Activated T-helper 2 cell treated with anti-CD3 and anti-CD28 coated beads, Interferon-gamma antibody, Interleukin-2, Interleukin-4, amounts not matched to agents 10 μg/mL and 5 μg/mL and 100 μg/mL, durations not matched to agents 14 hours and 24 hours and 36 hours (primary cell): ENCODE measurements at regions of chr3 and their contacts with region 1.

Region 1: DNA sequence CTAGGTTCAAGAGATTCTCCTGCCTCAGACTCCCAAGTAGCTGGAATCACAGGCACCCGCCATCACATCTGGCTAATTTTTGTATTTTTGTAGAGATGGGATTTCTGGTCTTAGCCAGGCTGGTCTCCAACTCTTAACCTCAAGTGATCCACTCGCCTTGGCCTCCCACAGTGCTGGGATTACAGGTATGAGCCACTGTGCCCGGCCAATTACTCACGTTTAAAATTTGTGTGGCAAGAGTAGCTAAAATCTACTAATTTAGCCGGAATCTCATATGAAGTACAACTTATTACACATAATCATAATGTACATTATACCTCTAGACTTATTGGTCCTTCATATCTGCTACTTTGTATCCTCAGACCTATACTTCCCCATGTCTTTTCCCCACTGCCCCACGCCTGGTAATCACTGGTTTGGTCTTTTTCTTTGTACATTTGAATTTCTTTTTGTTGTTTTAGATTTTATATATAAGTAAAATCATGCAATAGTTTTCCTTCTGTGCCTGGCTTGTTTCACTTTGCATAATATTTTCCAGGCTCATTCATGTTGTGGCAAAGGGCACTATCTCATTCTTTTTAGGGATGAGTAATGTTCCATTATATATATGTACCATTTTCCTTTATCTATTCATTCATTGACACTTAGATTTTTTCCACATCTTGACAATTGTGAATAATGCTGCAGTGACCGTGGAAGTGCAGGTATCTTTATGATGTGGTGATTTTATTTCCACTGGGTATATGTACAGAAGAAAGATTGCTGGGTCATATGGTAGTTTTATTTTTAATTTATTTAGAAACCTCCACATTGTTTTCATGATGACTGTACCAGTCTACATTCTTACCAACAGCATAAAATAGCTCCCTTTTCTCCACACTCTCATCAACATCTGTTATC is 605.0 kb upstream of the CBLB start:
- DNase-seq: no peak
- H3K4me3 Mint-ChIP-seq: no peak overlapping the region
- H3K27ac Mint-ChIP-seq: peak overlapping the region; percentile 84
- H3K4me1 Mint-ChIP-seq: peaks cover 7% of the 10 kb centered on the region
- H3K27me3 Mint-ChIP-seq: no peaks in the 10 kb centered on the region

Region 2: DNA sequence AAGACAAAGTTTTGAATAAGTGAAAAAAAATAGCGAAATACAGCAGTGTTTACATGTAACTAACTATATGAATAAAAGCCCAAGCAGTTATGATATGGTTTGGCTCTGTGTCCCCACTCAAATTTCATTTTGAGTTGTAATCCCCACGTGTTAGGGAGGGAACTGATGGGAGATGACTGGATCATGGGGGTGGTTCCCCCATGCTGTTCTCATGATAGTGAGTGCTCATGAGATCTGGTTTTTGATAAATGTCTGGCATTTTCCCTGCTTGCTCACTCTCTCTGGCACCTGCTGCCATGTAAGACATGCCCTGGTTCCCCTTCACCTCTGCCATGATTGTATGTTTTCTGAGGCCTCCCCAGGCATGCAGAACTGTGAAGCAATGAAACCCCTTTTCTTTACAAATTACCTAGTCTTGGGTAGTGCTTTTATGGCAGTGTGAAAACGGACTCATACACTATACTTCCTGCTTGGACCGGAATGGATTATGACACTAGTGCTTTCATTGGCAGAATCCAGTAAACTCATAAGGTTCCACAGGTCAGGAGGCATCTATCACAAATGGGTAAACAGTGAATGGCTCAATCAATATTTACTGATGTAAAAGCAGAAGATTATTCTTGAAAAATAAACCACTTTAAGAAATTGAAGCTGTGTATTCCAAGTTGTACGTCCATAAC is 797.1 kb before region 1 on chr3:
- intact Hi-C with region 1: loop called (anchors 1 kb)
- DNase-seq: no peak
- H3K4me3 Mint-ChIP-seq: no peak overlapping the region
- H3K27ac Mint-ChIP-seq: peak overlapping the region; percentile 74
- H3K4me1 Mint-ChIP-seq: peaks cover 23% of the 10 kb centered on the region
- H3K27me3 Mint-ChIP-seq: no peaks in the 10 kb centered on the region

Region 3: GRCh38 chr3:105891101-105891500 is 582.7 kb before region 1 on chr3:
- intact Hi-C with region 1: loop called (anchors 5 kb)
- DNase-seq: no peak
- H3K4me3 Mint-ChIP-seq: no peak overlapping the region
- H3K27ac Mint-ChIP-seq: peak overlapping the region; percentile 79
- H3K4me1 Mint-ChIP-seq: peaks cover 10% of the 10 kb centered on the region
- H3K27me3 Mint-ChIP-seq: no peaks in the 10 kb centered on the region

Region 4: GRCh38 chr3:106428565-106428994 is 45.2 kb before region 1 on chr3:
- intact Hi-C with region 1: loop called (anchors 1 kb)
- DNase-seq: no peak
- H3K4me3 Mint-ChIP-seq: no peak overlapping the region
- H3K27ac Mint-ChIP-seq: peak overlapping the region; percentile 93
- H3K4me1 Mint-ChIP-seq: peaks cover 44% of the 10 kb centered on the region
- H3K27me3 Mint-ChIP-seq: no peaks in the 10 kb centered on the region

Region 5: GRCh38 chr3:106589311-106589942 is 115.6 kb after region 1 on chr3:
- intact Hi-C with region 1: loop called (anchors 1 kb)
- DNase-seq: no peak
- H3K4me3 Mint-ChIP-seq: no peak overlapping the region
- H3K27ac Mint-ChIP-seq: peak overlapping the region; percentile 55
- H3K4me1 Mint-ChIP-seq: peaks cover 16% of the 10 kb centered on the region
- H3K27me3 Mint-ChIP-seq: no peaks in the 10 kb centered on the region